ENCODE measurements at regions of chr18 and their contacts with region 1.

Region 1: DNA sequence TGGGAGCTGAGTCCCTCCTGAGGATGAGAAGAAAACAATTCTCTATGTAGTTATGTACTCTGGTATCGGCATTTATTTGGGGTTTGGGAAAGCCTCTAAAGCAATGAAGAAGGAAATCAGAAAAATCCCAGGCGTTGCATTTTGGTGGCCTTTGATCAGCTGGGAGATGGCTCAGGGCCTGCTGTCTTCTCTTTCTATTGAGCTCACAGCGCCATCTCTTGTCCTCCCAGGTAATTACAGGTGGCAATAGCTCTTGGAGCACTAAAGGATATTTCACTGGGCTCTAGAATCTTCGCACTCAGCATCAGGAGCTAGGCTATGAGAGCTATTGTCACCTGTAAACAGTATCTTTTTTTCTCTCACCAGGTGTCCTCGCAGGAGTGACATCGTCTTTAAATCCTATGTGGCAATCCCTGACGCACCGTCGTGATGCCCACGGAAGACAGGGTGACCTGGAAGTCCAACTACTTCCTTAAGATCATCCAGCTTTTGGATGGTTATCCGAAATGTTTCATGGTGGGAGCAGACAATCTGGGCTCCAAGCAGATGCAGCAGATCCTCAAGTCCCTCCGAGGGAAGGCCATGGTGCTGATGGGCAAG is 76.1 kb upstream of the PMAIP1 start:
- DNase-seq: peak; percentile 41 to 89
- H3K4me3 ChIP-seq: no peak overlapping the region
- H3K27ac ChIP-seq: no peak overlapping the region
- H3K4me1 ChIP-seq: no peaks in the 10 kb centered on the region
- H3K27me3 ChIP-seq: no peaks in the 10 kb centered on the region
- CTCF ChIP-seq: peak; percentile 44 to 91 (median 88)
- EP300 ChIP-seq: no peak
- POLR2A ChIP-seq: no peak
- RAD21 ChIP-seq: peak; percentile 98 to 99

Region 2: GRCh38 chr18:59432803-59433597 is 390.7 kb before region 1 on chr18:
- CTCF ChIA-PET with region 1: interaction called, 11 read pairs
- POLR2A ChIA-PET with region 1: no interaction called
- DNase-seq: no peak
- H3K4me3 ChIP-seq: no peak overlapping the region
- H3K27ac ChIP-seq: no peak overlapping the region
- H3K4me1 ChIP-seq: no peaks in the 10 kb centered on the region
- H3K27me3 ChIP-seq: no peaks in the 10 kb centered on the region; a peak in 1 of 7 replicates
- CTCF ChIP-seq: no peak
- EP300 ChIP-seq: no peak
- POLR2A ChIP-seq: no peak
- RAD21 ChIP-seq: no peak

Region 3: GRCh38 chr18:59459369-59460079 is 364.2 kb before region 1 on chr18:
- CTCF ChIA-PET with region 1: interaction called, 106 read pairs
- POLR2A ChIA-PET with region 1: no interaction called
- DNase-seq: no peak
- H3K4me3 ChIP-seq: no peak overlapping the region
- H3K27ac ChIP-seq: no peak overlapping the region
- H3K4me1 ChIP-seq: peaks cover 0 to 2% (median 0%) of the 10 kb centered on the region in 4 experiments; a peak in 1 of 7 replicates
- H3K27me3 ChIP-seq: no peaks in the 10 kb centered on the region
- CTCF ChIP-seq: peak in 2 of 3 experiments; percentile 25 to 60; a peak in 2 of 4 replicates
- EP300 ChIP-seq: no peak
- POLR2A ChIP-seq: no peak
- RAD21 ChIP-seq: peak; percentile 71 to 76

Region 4: DNA sequence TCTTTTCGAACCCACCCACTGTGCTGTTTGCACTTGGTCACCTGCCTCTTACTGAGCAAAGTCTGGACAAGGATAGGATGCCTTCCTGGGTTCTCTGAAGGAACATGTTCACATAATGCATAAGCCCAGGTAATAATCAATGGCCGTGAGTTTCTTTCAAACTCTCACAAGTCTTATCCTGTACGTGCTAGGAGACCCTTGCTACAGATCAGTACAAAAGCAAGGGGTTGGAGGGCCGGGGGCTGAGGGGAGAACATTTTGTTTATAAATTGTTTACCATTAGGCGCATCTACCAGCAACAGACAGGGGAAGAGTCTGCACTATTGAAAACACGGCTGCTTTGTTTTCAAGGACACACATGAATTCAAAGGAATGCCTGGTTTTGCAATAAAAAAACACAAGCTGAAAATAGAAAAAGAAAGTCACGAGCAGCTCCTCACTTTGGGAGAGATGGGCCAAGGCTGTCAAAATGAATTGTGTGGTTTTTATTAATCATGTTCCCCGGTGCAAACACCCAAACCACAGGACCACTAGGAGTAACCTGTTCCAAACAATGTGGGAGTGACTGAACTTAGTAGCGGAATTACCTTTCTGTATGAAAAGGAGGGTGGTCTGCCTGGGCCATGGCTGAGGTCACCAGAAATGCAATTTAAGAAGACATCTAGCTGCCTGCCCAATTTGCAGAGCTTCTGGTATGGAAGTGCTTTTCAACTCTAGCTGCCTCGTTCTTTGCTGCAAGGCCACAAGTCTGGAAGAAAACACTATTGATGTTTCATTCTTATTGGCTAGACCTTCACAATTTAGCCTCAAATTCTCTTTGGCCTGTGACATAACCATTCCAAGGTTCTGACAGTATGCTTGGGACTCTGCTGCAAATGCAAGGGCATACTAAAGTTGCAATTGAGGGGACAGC is 200.0 kb before region 1 on chr18:
- CTCF ChIA-PET with region 1: interaction called, 15 read pairs
- POLR2A ChIA-PET with region 1: no interaction called
- DNase-seq: no peak
- H3K4me3 ChIP-seq: no peak overlapping the region
- H3K27ac ChIP-seq: no peak overlapping the region
- H3K4me1 ChIP-seq: no peaks in the 10 kb centered on the region
- H3K27me3 ChIP-seq: no peaks in the 10 kb centered on the region
- CTCF ChIP-seq: no peak
- EP300 ChIP-seq: no peak
- POLR2A ChIP-seq: no peak
- RAD21 ChIP-seq: no peak

Region 5: GRCh38 chr18:59646228-59646962 is 177.3 kb before region 1 on chr18:
- CTCF ChIA-PET with region 1: interaction called, 19 read pairs
- POLR2A ChIA-PET with region 1: no interaction called
- DNase-seq: no peak
- H3K4me3 ChIP-seq: no peak overlapping the region
- H3K27ac ChIP-seq: no peak overlapping the region
- H3K4me1 ChIP-seq: peaks cover 0 to 9% (median 3%) of the 10 kb centered on the region in 4 experiments; a peak in 4 of 7 replicates
- H3K27me3 ChIP-seq: no peaks in the 10 kb centered on the region; a peak in 2 of 7 replicates
- CTCF ChIP-seq: peak; percentile 50 to 68 (median 66)
- EP300 ChIP-seq: no peak
- POLR2A ChIP-seq: no peak
- RAD21 ChIP-seq: peak; percentile 39 to 55

Region 6: DNA sequence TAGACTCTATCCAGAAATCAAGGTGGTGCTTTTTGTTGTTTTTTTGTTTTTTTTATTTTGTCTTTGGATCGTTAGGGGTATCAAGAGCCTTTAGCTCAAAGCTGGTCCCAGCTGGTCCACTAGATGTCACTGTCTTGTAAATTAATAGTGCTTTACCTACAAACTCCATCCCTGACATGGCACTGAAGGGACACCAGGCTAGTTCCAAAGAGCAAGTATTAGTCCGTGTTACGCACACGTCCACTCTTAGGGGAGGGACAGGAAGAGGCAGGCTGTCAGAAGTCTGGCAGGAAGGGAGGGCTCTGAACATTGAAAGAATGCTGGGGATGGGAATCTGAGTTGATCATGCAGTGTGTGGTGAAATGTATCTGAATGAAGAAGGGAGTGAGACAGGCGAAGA is 40.6 kb before region 1 on chr18:
- CTCF ChIA-PET with region 1: interaction called, 40 read pairs
- POLR2A ChIA-PET with region 1: no interaction called
- DNase-seq: peak in 1 of 2 experiments; percentile 57
- H3K4me3 ChIP-seq: no peak overlapping the region
- H3K27ac ChIP-seq: no peak overlapping the region
- H3K4me1 ChIP-seq: no peaks in the 10 kb centered on the region
- H3K27me3 ChIP-seq: no peaks in the 10 kb centered on the region
- CTCF ChIP-seq: peak in 2 of 3 experiments; percentile 52 to 59; a peak in 3 of 4 replicates
- EP300 ChIP-seq: no peak
- POLR2A ChIP-seq: no peak
- RAD21 ChIP-seq: peak; percentile 61 to 66

Region 7: DNA sequence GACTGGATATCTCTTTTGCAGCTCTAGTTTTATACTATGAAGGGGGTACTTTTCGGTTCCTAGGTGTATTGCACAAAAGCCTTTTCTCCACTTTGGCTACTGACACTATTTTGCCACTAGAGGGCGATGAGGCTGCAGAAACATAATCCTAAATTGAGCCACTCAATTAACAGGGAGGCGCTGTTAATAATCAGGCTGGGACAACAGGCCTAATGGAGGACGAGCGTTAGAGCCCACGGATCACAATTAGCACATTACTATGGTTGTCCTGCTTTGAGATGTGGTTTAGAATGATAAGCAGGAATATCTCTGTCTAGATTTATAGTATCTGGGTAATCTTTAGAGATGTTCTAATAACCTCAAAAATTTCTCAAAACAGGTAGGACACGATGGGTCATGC is 13.9 kb after region 1 on chr18:
- CTCF ChIA-PET with region 1: interaction called, 40 read pairs
- POLR2A ChIA-PET with region 1: no interaction called
- DNase-seq: peak in 1 of 2 experiments; percentile 36
- H3K4me3 ChIP-seq: no peak overlapping the region
- H3K27ac ChIP-seq: no peak overlapping the region
- H3K4me1 ChIP-seq: peaks cover 0 to 15% (median 7%) of the 10 kb centered on the region in 4 experiments; a peak in 5 of 7 replicates
- H3K27me3 ChIP-seq: no peaks in the 10 kb centered on the region
- CTCF ChIP-seq: peak in 2 of 3 experiments; percentile 85 to 90; a peak in 3 of 4 replicates
- EP300 ChIP-seq: 0 out of 3 replicates have a peak, but pooled peaks of 1 of the 2 experiments have one; percentile 45
- POLR2A ChIP-seq: no peak
- RAD21 ChIP-seq: peak; percentile 86 to 93

Region 8: DNA sequence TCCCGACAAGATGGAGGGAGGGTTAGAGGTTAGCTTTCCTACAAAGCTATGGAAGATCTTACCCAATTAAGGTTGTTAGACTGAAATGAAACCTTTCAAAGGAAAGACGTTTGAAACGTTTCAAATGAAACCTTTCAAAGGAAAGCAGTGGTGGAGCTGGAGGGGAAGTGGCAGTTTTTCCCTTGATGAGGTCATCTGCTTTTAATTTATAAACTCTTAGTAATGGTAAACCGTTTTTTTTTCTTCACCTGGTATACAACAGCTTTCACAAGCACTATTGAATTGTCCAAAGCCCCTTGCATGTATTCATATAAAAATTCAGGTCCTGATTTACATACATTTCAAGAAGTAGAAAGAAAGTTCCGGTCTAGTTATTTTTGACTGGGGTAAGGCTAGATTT is 83.5 kb after region 1 on chr18:
- CTCF ChIA-PET with region 1: no interaction called
- POLR2A ChIA-PET with region 1: no interaction called
- DNase-seq: no peak
- H3K4me3 ChIP-seq: no peak overlapping the region
- H3K27ac ChIP-seq: no peak overlapping the region
- H3K4me1 ChIP-seq: peaks cover 4 to 18% (median 12%) of the 10 kb centered on the region in 4 experiments; a peak in 5 of 7 replicates
- H3K27me3 ChIP-seq: no peaks in the 10 kb centered on the region
- CTCF ChIP-seq: no peak
- EP300 ChIP-seq: no peak
- POLR2A ChIP-seq: no peak
- RAD21 ChIP-seq: no peak

Region 9: GRCh38 chr18:60019463-60019840 is 195.8 kb after region 1 on chr18:
- CTCF ChIA-PET with region 1: no interaction called
- POLR2A ChIA-PET with region 1: no interaction called
- DNase-seq: no peak
- H3K4me3 ChIP-seq: no peak overlapping the region
- H3K27ac ChIP-seq: no peak overlapping the region
- H3K4me1 ChIP-seq: peaks cover 0 to 10% (median 0%) of the 10 kb centered on the region in 4 experiments; a peak in 3 of 7 replicates
- H3K27me3 ChIP-seq: peaks cover 0 to 1% (median 0%) of the 10 kb centered on the region in 4 experiments; a peak in 1 of 7 replicates
- CTCF ChIP-seq: no peak
- EP300 ChIP-seq: no peak
- POLR2A ChIP-seq: no peak
- RAD21 ChIP-seq: no peak

Measured in H1 (cell line).